ENCODE measurements at regions of chr13 and their contacts with region 1.

Region 1: GRCh38 chr13:45200701-45201227 is at the start of gene KCTD4:
- DNase-seq: no peak
- total RNA-seq, gene KCTD4: 0.23 TPM in 1 of 2 donors, not detected in the other

Region 2: DNA sequence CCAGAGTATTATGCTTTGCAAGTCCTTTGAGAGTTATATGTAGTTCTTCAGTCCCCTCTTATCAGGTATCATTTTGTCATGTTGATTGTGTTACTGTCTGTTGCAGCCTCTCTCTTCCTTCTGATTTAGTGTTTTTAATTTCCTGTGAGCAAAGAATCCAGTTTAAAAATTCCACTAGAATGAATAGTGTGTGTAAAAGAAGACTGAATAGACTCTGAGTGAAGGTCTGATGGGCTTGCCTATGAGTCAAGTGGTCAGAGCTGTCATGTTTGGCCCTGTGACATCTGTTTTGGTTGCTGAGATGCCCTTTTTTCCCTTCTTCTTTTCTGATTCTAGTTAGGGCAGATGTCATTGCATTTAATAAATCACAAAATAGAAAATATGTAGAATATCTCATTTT is 23.4 kb after region 1 on chr13:
- intact Hi-C with region 1: no loop called
- DNase-seq: no peak

Region 3: DNA sequence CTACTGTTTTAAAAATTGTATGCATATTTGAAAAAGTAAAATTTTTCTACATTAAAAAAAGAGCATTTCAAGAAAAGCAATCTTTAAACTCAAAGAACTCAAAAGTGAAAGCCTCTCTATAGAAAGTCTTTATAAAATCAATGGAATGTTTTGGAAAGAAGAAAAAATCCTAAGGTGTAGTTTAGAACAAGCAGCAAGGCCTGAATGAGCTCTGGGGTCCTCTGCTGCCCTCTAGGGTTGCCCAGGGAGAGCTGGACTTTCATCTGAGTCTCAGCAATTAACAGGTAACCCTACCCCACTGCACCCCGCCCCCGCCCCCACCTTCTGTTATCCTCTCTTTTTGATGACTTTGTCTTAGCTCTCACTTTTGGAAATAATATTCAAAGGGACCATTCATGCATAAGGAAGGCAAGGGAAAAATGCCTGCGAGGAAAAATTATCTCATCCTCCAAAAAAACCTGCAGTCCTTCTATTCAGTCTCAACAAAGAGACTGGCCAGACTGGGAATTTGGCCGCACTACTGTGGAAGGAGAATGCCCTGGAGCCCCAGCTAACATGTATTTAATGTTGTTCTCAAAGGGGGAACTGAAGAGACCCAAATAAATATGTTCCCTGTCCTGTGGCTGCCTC is 193.3 kb after region 1 on chr13:
- intact Hi-C with region 1: no loop called
- DNase-seq: no peak

Region 4: GRCh38 chr13:45732916-45733315 is 532.2 kb after region 1 on chr13:
- intact Hi-C with region 1: loop called in 1 of 2 experiments (anchors 5 kb)
- DNase-seq: no peak

Region 5: GRCh38 chr13:46211483-46212351 is 1011.0 kb after region 1 on chr13 and contains the start of gene LRRC63:
- intact Hi-C with region 1: no loop called
- DNase-seq: peak; percentile 94
- total RNA-seq, gene LRRC63: 0.42 TPM in 1 of 2 donors, not detected in the other

Measured in posterior vena cava (tissue), 2 donors.